IMR-90 (cell line): ENCODE measurements at regions of chr2 and their contacts with region 1.

Region 1: GRCh38 chr2:133844214-133844892 is 276.1 kb upstream of the NCKAP5 start:
- DNase-seq: peak; percentile 88
- ATAC-seq: peak; percentile 83
- H3K4me3 ChIP-seq: no peak overlapping the region
- H3K27ac ChIP-seq: peak overlapping the region; percentile 56
- H3K4me1 ChIP-seq: peaks cover 19% of the 10 kb centered on the region
- H3K27me3 ChIP-seq: no peaks in the 10 kb centered on the region
- CTCF ChIP-seq: peak; percentile 96
- POLR2A ChIP-seq: peak; percentile 61
- RAD21 ChIP-seq: peak; percentile 99

Region 2: GRCh38 chr2:132651115-132652045 is 1193.0 kb before region 1 on chr2:
- CTCF ChIA-PET with region 1: no interaction called
- POLR2A ChIA-PET with region 1: no interaction called
- dilution Hi-C with region 1: no loop called
- in situ Hi-C with region 1: loop called (anchors 25 kb)
- intact Hi-C with region 1: no loop called
- DNase-seq: peak; percentile 71
- ATAC-seq: peak; percentile 91
- H3K4me3 ChIP-seq: no peak overlapping the region
- H3K27ac ChIP-seq: peak overlapping the region; percentile 4
- H3K4me1 ChIP-seq: peaks cover 13% of the 10 kb centered on the region
- H3K27me3 ChIP-seq: no peaks in the 10 kb centered on the region
- CTCF ChIP-seq: peak; percentile 71
- POLR2A ChIP-seq: no peak
- RAD21 ChIP-seq: peak; percentile 74

Region 3: DNA sequence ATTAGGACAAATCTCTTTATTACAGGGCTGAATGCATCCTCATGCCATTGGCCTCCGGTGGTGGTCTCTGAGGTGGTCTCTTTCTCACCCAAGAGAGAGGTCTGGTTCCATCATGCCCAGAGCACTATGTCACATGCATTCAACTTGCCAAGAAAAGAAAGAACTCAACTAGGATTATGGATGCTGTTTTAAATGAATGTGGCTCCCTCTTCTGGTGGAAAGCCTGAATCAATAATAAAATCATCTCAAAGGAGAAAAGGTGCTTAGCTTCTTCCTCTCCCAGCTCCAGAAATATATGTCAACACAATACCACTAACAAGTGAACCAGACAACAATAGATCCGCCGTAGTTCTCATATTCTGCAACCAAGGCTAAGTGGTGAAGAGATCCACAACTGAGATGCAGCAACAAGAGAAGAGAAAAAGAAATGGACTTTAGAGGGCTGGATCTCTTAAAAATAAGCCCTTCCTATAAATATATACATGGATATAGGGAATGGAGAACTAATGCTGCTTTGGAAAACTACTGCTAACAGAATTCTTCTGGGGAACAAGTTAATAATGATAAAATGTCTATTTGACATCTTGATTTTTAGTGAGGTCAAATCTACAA is 672.9 kb before region 1 on chr2:
- CTCF ChIA-PET with region 1: no interaction called
- POLR2A ChIA-PET with region 1: no interaction called
- dilution Hi-C with region 1: no loop called
- in situ Hi-C with region 1: no loop called
- intact Hi-C with region 1: loop called (anchors 2 kb)
- DNase-seq: peak; percentile 74
- ATAC-seq: peak; percentile 64
- H3K4me3 ChIP-seq: no peak overlapping the region
- H3K27ac ChIP-seq: no peak overlapping the region
- H3K4me1 ChIP-seq: peaks cover 11% of the 10 kb centered on the region
- H3K27me3 ChIP-seq: no peaks in the 10 kb centered on the region
- CTCF ChIP-seq: peak; percentile 80
- POLR2A ChIP-seq: no peak
- RAD21 ChIP-seq: peak; percentile 87

Region 4: DNA sequence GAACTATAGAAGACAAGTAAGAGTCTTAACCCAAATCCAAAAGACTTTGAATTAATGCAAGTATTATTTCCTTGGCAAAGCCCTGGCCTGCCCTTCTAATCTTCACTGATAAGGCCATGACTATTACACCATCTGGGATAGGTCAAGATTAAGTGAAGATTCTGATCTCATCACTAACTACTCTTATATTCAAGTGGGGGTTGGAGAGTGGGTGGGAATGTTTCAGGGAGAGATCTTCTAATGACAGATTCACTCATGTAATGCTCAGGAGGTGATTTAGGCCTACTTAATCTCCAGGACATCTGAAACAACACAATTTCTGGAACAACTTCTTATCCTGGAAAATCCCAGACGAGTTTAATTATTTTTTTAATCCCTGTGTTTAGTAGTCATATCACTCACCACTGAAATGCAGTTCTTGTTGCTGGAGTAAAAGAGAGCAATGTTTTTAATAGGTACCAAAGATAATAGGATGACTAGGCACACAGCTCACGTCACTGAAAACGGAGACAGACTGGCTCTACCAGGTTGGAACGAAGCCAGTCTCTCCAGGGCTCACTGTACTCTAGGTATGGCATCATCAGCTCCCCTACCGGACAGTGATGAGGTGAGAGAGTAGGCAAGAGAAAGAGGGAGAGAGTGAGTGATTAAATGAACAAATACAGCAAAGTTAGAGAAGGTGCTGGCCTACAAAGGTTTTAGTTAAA is 409.2 kb before region 1 on chr2:
- CTCF ChIA-PET with region 1: interaction called, 3 read pairs
- POLR2A ChIA-PET with region 1: no interaction called
- dilution Hi-C with region 1: no loop called
- in situ Hi-C with region 1: no loop called
- intact Hi-C with region 1: loop called (anchors 10 kb)
- DNase-seq: peak; percentile 91
- ATAC-seq: peak; percentile 57
- H3K4me3 ChIP-seq: no peak overlapping the region
- H3K27ac ChIP-seq: no peak overlapping the region
- H3K4me1 ChIP-seq: peaks cover 8% of the 10 kb centered on the region
- H3K27me3 ChIP-seq: no peaks in the 10 kb centered on the region
- CTCF ChIP-seq: no peak; the same call in 1 of the 2 replicates
- POLR2A ChIP-seq: no peak
- RAD21 ChIP-seq: no peak

Region 5: GRCh38 chr2:133574620-133575019 is 269.7 kb before region 1 on chr2:
- CTCF ChIA-PET with region 1: no interaction called
- POLR2A ChIA-PET with region 1: interaction called, 14 read pairs
- dilution Hi-C with region 1: no loop called
- in situ Hi-C with region 1: no loop called
- intact Hi-C with region 1: no loop called
- DNase-seq: no peak
- ATAC-seq: no peak
- H3K4me3 ChIP-seq: no peak overlapping the region
- H3K27ac ChIP-seq: no peak overlapping the region
- H3K4me1 ChIP-seq: peaks cover 9% of the 10 kb centered on the region
- H3K27me3 ChIP-seq: no peaks in the 10 kb centered on the region
- CTCF ChIP-seq: no peak
- POLR2A ChIP-seq: no peak
- RAD21 ChIP-seq: no peak

Region 6: DNA sequence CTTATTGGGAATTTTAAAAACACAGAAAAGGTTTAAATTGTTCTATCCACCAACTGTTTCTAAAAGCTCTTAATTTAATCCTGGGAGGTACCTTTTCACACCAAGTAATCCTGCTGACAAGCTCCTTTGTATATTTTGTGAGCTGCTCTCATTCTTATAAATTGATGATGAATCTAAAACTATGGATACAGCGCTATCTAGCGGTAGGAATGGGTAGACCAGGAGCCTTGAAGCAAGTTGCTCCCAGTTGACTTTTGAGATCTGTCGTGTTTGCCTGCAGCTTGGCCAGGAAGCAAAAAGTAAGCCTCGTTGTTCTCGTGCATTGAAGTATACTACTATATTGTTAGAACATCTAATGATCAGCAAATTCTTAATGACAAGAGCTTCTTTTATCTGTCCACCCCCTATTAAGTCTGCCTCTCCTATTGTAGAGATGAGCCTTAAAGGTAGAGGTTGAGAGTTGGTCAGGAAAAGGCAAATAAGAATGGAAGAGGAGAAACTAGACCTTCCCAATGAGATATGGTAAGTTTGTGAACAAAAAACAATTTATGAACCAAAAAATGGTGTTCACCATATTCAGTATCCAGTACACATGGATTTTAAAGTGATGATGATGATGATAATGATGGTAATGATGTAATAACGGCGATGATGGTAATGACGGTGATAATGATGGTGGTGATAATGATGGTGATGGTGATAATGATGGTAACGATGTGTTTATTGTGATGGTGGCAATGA is 64.1 kb before region 1 on chr2:
- CTCF ChIA-PET with region 1: interaction called, 11 read pairs
- POLR2A ChIA-PET with region 1: no interaction called
- dilution Hi-C with region 1: no loop called
- in situ Hi-C with region 1: no loop called
- intact Hi-C with region 1: loop called (anchors 1 kb)
- DNase-seq: peak; percentile 86
- ATAC-seq: peak; percentile 94
- H3K4me3 ChIP-seq: no peak overlapping the region
- H3K27ac ChIP-seq: no peak overlapping the region
- H3K4me1 ChIP-seq: 0 out of 2 replicates have a peak, but pooled peaks cover 2% of the 10 kb centered on the region
- H3K27me3 ChIP-seq: no peaks in the 10 kb centered on the region
- CTCF ChIP-seq: peak; percentile 84
- POLR2A ChIP-seq: no peak
- RAD21 ChIP-seq: peak; percentile 86

Region 7: DNA sequence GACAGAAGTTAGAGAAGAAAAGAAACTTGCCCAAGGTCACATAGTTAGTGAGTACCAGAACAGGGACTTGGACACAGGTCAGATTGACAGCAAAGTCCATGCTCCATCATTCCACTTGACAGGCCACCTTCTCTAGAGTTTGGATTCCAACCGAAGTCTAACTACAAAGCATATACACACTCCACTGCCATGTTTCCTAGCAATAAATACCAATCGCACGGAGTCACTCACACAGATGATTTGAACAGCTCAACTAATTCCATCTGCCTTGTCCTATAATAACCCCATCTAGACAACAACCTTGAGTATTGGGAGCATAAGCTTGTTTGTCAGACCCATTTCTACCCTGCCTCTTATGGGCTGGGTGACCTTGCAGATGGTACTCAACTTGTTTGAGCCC is 74.9 kb after region 1 on chr2:
- CTCF ChIA-PET with region 1: no interaction called
- POLR2A ChIA-PET with region 1: no interaction called
- dilution Hi-C with region 1: no loop called
- in situ Hi-C with region 1: no loop called
- intact Hi-C with region 1: no loop called
- DNase-seq: peak; percentile 31
- ATAC-seq: peak; percentile 92
- H3K4me3 ChIP-seq: no peak overlapping the region
- H3K27ac ChIP-seq: no peak overlapping the region
- H3K4me1 ChIP-seq: peaks cover 4% of the 10 kb centered on the region
- H3K27me3 ChIP-seq: no peaks in the 10 kb centered on the region; the same call in 1 of the 2 replicates
- CTCF ChIP-seq: no peak
- POLR2A ChIP-seq: no peak
- RAD21 ChIP-seq: no peak